OCI-LY7 (cell line): ENCODE measurements at regions of chr7 and their contacts with region 1.

Region 1: GRCh38 chr7:149005241-149006050 is 22.9 kb downstream of the PDIA4 start:
- DNase-seq: peak; percentile 85
- H3K4me3 ChIP-seq: no peak overlapping the region
- H3K27ac ChIP-seq: no peak overlapping the region
- H3K4me1 ChIP-seq: no peaks in the 10 kb centered on the region
- CTCF ChIP-seq: peak; percentile 93

Region 2: GRCh38 chr7:149067876-149068275 is 62.4 kb after region 1 on chr7:
- CTCF ChIA-PET with region 1: interaction called, 5 read pairs
- POLR2A ChIA-PET with region 1: interaction called, 3 read pairs
- intact Hi-C with region 1: loop called (anchors 1 kb)
- DNase-seq: peak; percentile 39
- H3K4me3 ChIP-seq: no peak overlapping the region
- H3K27ac ChIP-seq: no peak overlapping the region
- H3K4me1 ChIP-seq: peaks cover 9% of the 10 kb centered on the region
- CTCF ChIP-seq: peak; percentile 69